ENCODE measurements at regions of chr6 and their contacts with region 1.

Region 1: GRCh38 chr6:159862103-159862502 is 28.7 kb upstream of the MAS1 start:
- DNase-seq: no peak
- ATAC-seq: no peak
- H3K4me3 ChIP-seq: no peak overlapping the region
- H3K27ac ChIP-seq: no peak overlapping the region
- H3K4me1 ChIP-seq: no peaks in the 10 kb centered on the region
- H3K27me3 ChIP-seq: no peaks in the 10 kb centered on the region
- CTCF ChIP-seq: no peak
- POLR2A ChIP-seq: no peak

Region 2: DNA sequence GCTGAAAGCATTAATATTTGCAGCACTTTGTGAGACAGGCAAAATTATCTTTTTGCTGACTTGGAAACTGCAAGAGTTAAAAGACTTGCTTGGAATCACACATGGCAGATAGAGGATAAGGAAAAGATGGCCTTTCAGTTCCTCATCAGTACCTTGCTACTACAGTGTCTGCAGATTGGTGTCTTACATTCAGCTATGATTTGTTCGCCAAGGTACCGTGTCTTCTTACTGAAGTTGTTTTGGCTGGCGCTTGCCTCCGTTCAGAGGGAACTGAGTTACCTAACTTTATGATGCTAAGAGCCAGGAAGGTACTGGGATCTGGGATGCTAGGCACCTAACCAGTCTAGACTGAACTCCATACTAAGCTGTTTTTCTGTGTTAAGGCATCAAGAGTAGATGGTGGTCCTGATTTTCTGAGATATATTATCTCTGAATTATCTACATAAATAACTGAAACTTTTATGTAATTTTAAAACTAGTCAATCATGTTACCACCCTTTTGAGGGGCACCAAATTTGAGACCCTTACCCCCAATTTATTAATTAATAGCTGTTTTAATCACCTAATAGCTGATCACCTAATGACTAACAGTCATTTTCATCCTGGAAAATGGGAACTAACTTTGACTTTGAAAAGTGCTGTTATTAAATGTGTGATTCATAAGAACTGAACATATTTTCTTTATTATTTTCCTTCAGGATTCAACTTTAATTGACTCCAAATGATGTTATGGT is 132.3 kb before region 1 on chr6:
- intact Hi-C with region 1: no loop called
- DNase-seq: no peak
- ATAC-seq: no peak
- H3K4me3 ChIP-seq: no peak overlapping the region
- H3K27ac ChIP-seq: no peak overlapping the region
- H3K4me1 ChIP-seq: peaks cover 0 to 38% (median 8%) of the 10 kb centered on the region in 4 donors
- H3K27me3 ChIP-seq: no peaks in the 10 kb centered on the region
- CTCF ChIP-seq: no peak
- POLR2A ChIP-seq: no peak

Region 3: DNA sequence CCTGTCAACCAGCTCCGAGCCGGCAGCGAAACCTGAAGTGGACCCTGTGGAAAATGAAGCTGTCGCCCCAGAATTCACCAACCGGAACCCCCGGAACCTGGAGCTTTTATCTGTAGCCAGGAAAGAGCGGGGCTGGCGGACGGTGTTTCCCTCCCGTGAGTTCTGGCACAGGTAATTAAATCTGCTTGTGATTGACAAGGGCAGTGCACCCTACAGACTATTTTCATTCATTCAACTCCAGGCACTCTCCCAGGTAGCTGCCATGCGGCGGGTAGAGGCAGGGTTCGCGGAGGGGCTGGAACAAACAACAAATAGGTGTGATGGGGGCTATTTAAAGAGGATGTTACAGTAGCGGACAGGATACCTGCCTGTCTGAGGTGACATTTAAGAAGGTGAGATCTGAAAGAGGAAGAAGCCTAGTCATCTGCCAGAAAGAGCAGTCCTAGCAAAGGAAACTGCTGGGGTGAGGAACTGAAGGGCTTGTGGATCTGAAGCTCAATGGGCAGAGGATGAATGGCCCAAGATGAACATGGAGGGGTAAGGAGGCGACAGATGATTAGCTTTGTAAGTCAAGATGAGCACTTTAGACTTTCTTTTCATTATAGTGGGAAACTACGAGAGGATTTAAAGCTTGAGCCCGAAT is 71.0 kb before region 1 on chr6:
- intact Hi-C with region 1: no loop called
- DNase-seq: peak in 2 of 3 donors; percentile 51 to 57
- ATAC-seq: no peak
- H3K4me3 ChIP-seq: peak overlapping the region; percentile 88 to 97 (median 95)
- H3K27ac ChIP-seq: peak overlapping the region; percentile 96 to 100 (median 98)
- H3K4me1 ChIP-seq: peaks cover 0 to 37% (median 12%) of the 10 kb centered on the region in 4 donors
- H3K27me3 ChIP-seq: no peaks in the 10 kb centered on the region
- CTCF ChIP-seq: no peak
- POLR2A ChIP-seq: no peak

Region 4: GRCh38 chr6:159929819-159930218 is 67.7 kb after region 1 on chr6:
- intact Hi-C with region 1: loop called in 1 of 2 experiments (anchors 10 kb)
- DNase-seq: peak in 1 of 3 donors; percentile 31
- ATAC-seq: peak in 3 of 4 donors; percentile 29 to 68 (median 60)
- H3K4me3 ChIP-seq: no peak overlapping the region
- H3K27ac ChIP-seq: no peak overlapping the region
- H3K4me1 ChIP-seq: peaks cover 0 to 5% (median 0%) of the 10 kb centered on the region in 4 donors
- H3K27me3 ChIP-seq: no peaks in the 10 kb centered on the region
- CTCF ChIP-seq: no peak
- POLR2A ChIP-seq: no peak

Measured in right lobe of liver (tissue), 6 donors.